PC-3 (cell line): ENCODE measurements at regions of chr13 and their contacts with region 1.

Region 1: DNA sequence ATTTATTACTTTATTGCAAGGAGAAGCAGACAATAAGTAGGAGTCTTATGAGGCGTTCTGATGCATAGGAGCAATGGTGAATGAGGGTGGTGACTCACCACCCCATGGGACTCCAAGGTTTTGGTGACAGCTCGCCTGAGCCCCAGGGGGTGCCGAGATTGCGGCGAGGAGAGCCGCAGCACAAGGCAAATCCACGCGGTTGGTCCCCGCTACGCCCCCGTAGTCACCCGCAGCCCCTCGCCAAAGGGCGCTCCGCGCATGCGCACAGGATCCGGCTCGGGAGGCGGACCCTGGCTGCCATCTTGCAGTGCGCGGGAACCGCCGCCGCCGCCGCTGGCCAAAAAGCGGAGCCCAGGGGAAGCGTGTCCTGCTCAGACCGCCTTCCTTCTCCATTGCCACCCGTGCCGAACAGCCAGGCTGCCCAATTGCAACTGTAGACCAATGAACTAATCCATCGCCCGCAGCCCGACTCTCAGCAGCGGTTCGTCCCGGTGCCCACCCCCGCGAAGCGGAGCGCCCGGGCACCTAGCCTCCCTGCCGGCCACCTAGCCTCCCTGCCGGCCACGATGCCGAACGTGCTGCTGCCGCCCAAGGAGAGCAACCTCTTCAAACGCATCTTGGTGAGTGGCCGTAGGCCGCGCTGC is at the start of gene NAA16:
- DNase-seq: peak; percentile 86
- ATAC-seq: peak; percentile 77
- H3K4me3 ChIP-seq: peak within 1 kb of the TSS; percentile 89
- H3K27ac ChIP-seq: peak within 1 kb of the TSS; percentile 68
- H3K4me1 ChIP-seq: peaks cover 18% of the 10 kb centered on the region; the same call in 1 of the 2 replicates
- H3K27me3 ChIP-seq: no peaks in the 10 kb centered on the region
- CTCF ChIP-seq: no peak
- total RNA-seq, gene NAA16: 9.8 and 11.3 TPM in 2 replicates

Region 2: DNA sequence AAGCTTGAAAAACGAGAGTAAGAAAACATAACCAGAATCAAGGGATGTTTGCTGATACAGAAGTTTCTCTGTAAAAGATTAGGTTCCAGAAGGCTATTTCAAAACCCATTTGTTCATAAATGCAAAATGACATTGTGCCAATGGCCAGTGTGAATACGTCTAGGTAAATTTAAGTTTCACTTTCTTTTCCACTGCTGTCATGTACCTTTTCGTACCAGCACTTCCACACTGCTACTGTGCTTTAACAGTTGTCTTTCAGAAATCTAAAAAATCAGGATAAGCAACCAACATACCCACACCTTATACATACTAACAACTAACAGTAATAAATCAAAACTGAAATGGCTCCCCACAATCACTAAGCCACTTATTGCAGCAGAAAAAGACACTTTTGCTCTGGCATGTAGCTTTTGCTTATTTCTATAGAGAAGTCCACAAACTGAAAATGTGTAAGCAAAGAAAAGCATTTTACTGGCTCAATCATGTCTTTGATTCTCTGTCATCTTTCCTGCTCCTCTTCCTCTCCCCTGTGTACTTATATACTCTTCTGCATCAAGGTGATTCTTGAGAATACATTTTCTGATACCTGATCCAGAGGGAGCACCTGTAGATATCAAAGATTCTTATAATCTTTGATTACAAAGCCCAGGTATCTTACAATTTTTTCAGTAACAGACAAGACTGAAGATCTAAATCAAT is 326.3 kb before region 1 on chr13:
- CTCF ChIA-PET with region 1: no interaction called
- POLR2A ChIA-PET with region 1: no interaction called
- intact Hi-C with region 1: no loop called
- DNase-seq: no peak
- ATAC-seq: no peak
- H3K4me3 ChIP-seq: no peak overlapping the region
- H3K27ac ChIP-seq: no peak overlapping the region
- H3K4me1 ChIP-seq: peaks cover 10% of the 10 kb centered on the region
- H3K27me3 ChIP-seq: no peaks in the 10 kb centered on the region
- CTCF ChIP-seq: no peak

Region 3: GRCh38 chr13:41132512-41133152 is 178.5 kb before region 1 on chr13 and contains the start of gene KBTBD6:
- CTCF ChIA-PET with region 1: no interaction called
- POLR2A ChIA-PET with region 1: no interaction called
- intact Hi-C with region 1: loop called (anchors 10 kb)
- DNase-seq: peak; percentile 98
- ATAC-seq: peak; percentile 95
- H3K4me3 ChIP-seq: peak within 1 kb of the TSS; percentile 85
- H3K27ac ChIP-seq: peak within 1 kb of the TSS; percentile 68
- H3K4me1 ChIP-seq: peaks cover 41% of the 10 kb centered on the region
- H3K27me3 ChIP-seq: no peaks in the 10 kb centered on the region
- CTCF ChIP-seq: no peak
- total RNA-seq, gene KBTBD6: 4.4 and 5.1 TPM in 2 replicates

Region 4: GRCh38 chr13:41284512-41285288 is 26.4 kb before region 1 on chr13:
- CTCF ChIA-PET with region 1: no interaction called
- POLR2A ChIA-PET with region 1: no interaction called
- intact Hi-C with region 1: loop called (anchors 1 kb)
- DNase-seq: peak; percentile 95
- ATAC-seq: peak; percentile 97
- H3K4me3 ChIP-seq: no peak overlapping the region
- H3K27ac ChIP-seq: peak overlapping the region; percentile 96
- H3K4me1 ChIP-seq: peaks cover 12% of the 10 kb centered on the region
- H3K27me3 ChIP-seq: no peaks in the 10 kb centered on the region
- CTCF ChIP-seq: no peak